Heart right ventricle (tissue), 16 donors: ENCODE measurements at regions of chr3 and their contacts with region 1.

Region 1: DNA sequence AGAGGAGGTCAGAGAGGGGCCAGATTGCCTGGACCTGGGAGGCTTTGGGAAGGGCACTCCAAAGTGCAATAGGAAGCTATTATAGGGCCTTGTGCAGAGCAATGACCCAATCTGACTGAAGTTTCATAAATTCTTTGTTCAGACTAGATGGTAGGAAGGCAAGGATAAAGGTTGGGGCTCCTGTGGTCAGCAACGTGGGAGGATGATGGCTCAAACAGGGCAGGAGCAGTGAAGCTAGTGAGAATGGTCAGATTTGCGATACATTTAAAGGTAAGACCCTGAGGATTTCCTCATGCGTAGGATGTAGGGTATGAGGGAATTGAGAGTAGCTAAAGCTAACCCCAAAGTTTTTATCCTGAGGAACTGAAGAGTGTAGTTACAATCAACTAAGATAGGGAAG is 139.0 kb downstream of the USP13 start:
- DNase-seq: no peak
- ATAC-seq: no peak
- H3K4me3 ChIP-seq: no peak overlapping the region
- H3K27ac ChIP-seq: no peak overlapping the region
- H3K4me1 ChIP-seq: peaks cover 0 to 5% (median 0%) of the 10 kb centered on the region in 9 donors
- H3K27me3 ChIP-seq: no peaks in the 10 kb centered on the region
- CTCF ChIP-seq: no peak

Region 2: DNA sequence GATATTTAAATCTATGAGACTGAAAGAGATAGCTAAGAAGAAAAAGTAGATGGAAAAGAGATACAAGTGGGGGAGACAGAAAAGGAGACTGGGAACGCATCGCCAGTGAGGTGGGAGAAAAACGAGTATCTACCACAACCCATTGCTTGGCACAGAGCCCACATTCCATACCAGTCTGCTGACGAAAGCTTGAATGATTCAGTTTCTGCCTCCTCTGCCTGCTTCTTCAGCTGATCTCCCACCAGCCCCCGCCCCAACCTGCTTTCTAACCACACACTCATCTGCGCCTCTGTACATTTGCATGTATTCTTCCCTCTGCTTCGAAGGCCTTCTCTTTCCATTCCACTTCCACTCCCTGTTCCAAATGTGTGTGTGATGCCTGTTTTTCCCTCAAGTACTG is 49.2 kb after region 1 on chr3:
- intact Hi-C with region 1: loop called in 1 of 10 experiments (anchors 2 kb)
- DNase-seq: no peak
- ATAC-seq: peak in 1 of 8 donors; percentile 14
- H3K4me3 ChIP-seq: no peak overlapping the region
- H3K27ac ChIP-seq: no peak overlapping the region
- H3K4me1 ChIP-seq: no peaks in the 10 kb centered on the region
- H3K27me3 ChIP-seq: no peaks in the 10 kb centered on the region
- CTCF ChIP-seq: no peak